ENCODE measurements at regions of chr14 and their contacts with region 1.

Region 1: GRCh38 chr14:61749867-61750266 is 12.4 kb upstream of the SNAPC1 start:
- DNase-seq: no peak
- ATAC-seq: peak; percentile 44 to 72 (median 50)
- H3K4me3 ChIP-seq: peak overlapping the region; percentile 68
- H3K27ac ChIP-seq: peak overlapping the region; percentile 92
- H3K4me1 ChIP-seq: peaks cover 32% of the 10 kb centered on the region
- H3K27me3 ChIP-seq: no peaks in the 10 kb centered on the region
- CTCF ChIP-seq: no peak

Region 2: DNA sequence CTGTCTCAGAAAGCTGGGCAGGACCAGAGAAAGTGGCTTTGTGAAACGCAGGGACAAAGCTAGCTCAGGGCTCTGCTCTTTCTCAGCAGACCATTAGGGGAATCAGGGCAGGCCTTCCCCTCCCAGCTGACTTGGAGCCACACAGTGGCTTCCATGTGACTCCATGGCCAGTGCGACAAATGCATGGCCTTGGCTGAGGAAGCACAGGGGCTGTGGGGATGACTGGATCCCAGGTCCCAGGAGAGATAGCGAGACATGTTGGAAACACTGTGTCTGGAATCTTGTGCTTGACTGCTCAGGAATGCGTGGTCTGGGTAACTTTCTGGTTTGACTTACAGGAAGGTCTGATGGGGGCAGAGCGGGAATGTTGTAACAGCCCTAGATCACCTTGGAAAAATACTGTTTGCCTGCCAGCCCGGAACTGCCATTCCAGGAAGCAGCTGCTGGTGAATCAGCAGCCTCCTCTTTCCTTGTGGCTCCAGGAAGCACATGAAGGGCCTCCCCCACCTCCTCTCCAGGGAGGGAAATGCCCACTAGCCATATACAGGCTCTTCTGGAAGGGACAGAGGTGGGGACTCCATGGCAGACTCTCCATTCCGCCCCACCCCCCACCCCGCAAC is 188.1 kb before region 1 on chr14:
- intact Hi-C with region 1: no loop called
- DNase-seq: peak; percentile 76 to 78
- ATAC-seq: peak; percentile 72 to 85 (median 81)
- H3K4me3 ChIP-seq: no peak overlapping the region
- H3K27ac ChIP-seq: peak overlapping the region; percentile 83
- H3K4me1 ChIP-seq: peaks cover 28% of the 10 kb centered on the region
- H3K27me3 ChIP-seq: no peaks in the 10 kb centered on the region
- CTCF ChIP-seq: no peak

Region 3: GRCh38 chr14:61694830-61695694 is 54.8 kb before region 1 on chr14 and contains the start of gene HIF1A:
- intact Hi-C with region 1: loop called in 1 of 2 experiments (anchors 5 kb)
- DNase-seq: peak; percentile 95 to 98
- ATAC-seq: peak; percentile 97 to 99 (median 98)
- H3K4me3 ChIP-seq: peak within 1 kb of the TSS; percentile 96
- H3K27ac ChIP-seq: peak within 1 kb of the TSS; percentile 93
- H3K4me1 ChIP-seq: peaks cover 34% of the 10 kb centered on the region
- H3K27me3 ChIP-seq: no peaks in the 10 kb centered on the region
- CTCF ChIP-seq: no peak
- total RNA-seq, gene HIF1A: 16.5 to 32.4 (median 24.5) TPM